CD4-positive, alpha-beta T cell (primary cell): ENCODE measurements at regions of chr1 and their contacts with region 1.

Region 1: DNA sequence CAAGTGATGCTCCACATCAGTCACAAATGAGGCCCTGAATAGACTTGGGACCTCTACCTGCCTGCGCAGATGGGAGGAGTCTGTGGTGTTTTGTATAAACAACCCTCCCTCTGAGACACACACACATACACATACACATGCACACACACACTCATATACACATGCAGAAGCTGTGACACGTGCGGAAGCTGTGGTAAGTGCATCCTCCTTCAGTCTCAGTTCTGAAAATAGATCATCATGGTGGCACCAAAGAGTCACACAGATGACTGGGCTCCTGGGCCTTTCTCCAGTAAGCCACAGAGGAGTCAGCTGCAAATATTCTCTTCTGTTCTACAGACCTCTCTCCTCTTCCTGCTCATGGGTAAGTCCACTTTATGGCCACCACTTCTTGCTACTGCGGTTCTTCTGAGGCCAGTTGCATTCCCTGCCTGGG is at the start of gene LY9:
- DNase-seq: peak; percentile 64 to 97 (median 72)
- ATAC-seq: peak; percentile 88
- H3K4me3 ChIP-seq: peak within 1 kb of the TSS; percentile 74
- H3K4me3 Mint-ChIP-seq: peak within 1 kb of the TSS; percentile 97
- H3K27ac ChIP-seq: peak within 1 kb of the TSS; percentile 73 to 88
- H3K27ac Mint-ChIP-seq: peak within 1 kb of the TSS; percentile 92
- H3K4me1 ChIP-seq: peaks cover 37% of the 10 kb centered on the region
- H3K4me1 Mint-ChIP-seq: peaks cover 62% of the 10 kb centered on the region
- H3K27me3 ChIP-seq: no peaks in the 10 kb centered on the region
- H3K27me3 Mint-ChIP-seq: no peaks in the 10 kb centered on the region
- CTCF ChIP-seq: no peak
- total RNA-seq, gene LY9: 124 TPM

Region 2: DNA sequence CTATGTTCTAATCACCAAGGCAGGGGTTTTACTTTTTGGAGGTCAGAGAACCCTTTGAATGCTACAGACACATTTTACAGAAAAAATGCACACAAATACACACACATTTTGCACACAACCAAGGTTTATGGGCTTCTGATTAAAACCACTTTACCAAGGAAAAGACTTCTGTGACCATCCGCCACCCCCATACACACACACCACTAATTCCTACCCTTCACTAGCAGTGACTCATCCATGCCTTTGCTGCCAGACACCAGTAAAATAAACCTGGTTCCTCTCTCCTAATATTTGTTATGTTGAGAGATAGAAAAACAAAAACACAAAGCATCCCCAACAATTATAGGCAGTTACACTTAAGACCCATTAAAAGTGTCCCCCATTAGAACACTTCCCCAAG is 777.1 kb before region 1 on chr1:
- CTCF ChIA-PET with region 1: no interaction called
- POLR2A ChIA-PET with region 1: no interaction called
- intact Hi-C with region 1: no loop called
- DNase-seq: no peak
- ATAC-seq: no peak
- H3K4me3 ChIP-seq: no peak overlapping the region
- H3K4me3 Mint-ChIP-seq: no peak overlapping the region
- H3K27ac ChIP-seq: no peak overlapping the region
- H3K27ac Mint-ChIP-seq: no peak overlapping the region
- H3K4me1 ChIP-seq: no peaks in the 10 kb centered on the region
- H3K4me1 Mint-ChIP-seq: no peaks in the 10 kb centered on the region
- H3K27me3 ChIP-seq: peaks cover 0 to 3% of the 10 kb centered on the region in 2 experiments
- H3K27me3 Mint-ChIP-seq: peaks cover 6% of the 10 kb centered on the region
- CTCF ChIP-seq: no peak

Region 3: DNA sequence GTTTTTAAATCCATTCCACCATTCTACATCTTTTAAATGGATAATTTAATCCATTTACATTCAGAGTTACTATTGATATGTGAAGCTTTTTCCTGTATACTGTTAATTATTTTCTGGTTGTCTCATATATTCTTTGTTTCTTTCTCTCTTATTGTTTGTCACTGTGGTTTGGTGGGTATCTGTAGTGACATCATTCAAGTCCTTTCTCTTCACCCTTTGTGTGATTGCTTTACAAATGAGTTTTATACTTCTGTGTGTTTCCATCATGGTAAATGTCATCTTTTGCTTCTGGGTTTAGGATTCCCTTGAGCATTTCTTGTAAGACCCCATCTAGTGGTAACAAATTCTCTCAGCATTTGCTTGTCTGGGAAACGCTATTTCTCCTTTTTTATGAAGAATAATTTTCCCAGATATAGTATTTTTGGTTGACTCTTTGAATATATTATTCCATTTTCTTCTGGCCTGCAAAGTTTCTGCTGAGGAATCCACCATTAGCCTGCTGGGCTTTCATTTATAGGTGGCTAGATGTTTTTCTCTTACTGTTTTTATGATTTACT is 10.2 kb after region 1 on chr1:
- CTCF ChIA-PET with region 1: interaction called, 6 read pairs
- POLR2A ChIA-PET with region 1: interaction called, 22 read pairs
- intact Hi-C with region 1: no loop called
- DNase-seq: no peak
- ATAC-seq: peak; percentile 66
- H3K4me3 ChIP-seq: no peak overlapping the region
- H3K4me3 Mint-ChIP-seq: peak overlapping the region; percentile 5
- H3K27ac ChIP-seq: no peak overlapping the region
- H3K27ac Mint-ChIP-seq: peak overlapping the region; percentile 40
- H3K4me1 ChIP-seq: peaks cover 44% of the 10 kb centered on the region
- H3K4me1 Mint-ChIP-seq: peaks cover 88% of the 10 kb centered on the region
- H3K27me3 ChIP-seq: no peaks in the 10 kb centered on the region
- H3K27me3 Mint-ChIP-seq: no peaks in the 10 kb centered on the region
- CTCF ChIP-seq: no peak

Region 4: GRCh38 chr1:160813215-160813614 is 17.2 kb after region 1 on chr1:
- CTCF ChIA-PET with region 1: no interaction called
- POLR2A ChIA-PET with region 1: interaction called, 22 read pairs
- intact Hi-C with region 1: loop called in 1 of 2 experiments (anchors 2 kb)
- DNase-seq: peak in 3 of 14 experiments; percentile 26 to 50 (median 38)
- ATAC-seq: peak; percentile 65
- H3K4me3 ChIP-seq: no peak overlapping the region
- H3K4me3 Mint-ChIP-seq: no peak overlapping the region
- H3K27ac ChIP-seq: no peak overlapping the region
- H3K27ac Mint-ChIP-seq: peak overlapping the region; percentile 71
- H3K4me1 ChIP-seq: peaks cover 20% of the 10 kb centered on the region
- H3K4me1 Mint-ChIP-seq: peaks cover 52% of the 10 kb centered on the region
- H3K27me3 ChIP-seq: no peaks in the 10 kb centered on the region
- H3K27me3 Mint-ChIP-seq: no peaks in the 10 kb centered on the region
- CTCF ChIP-seq: no peak

Region 5: GRCh38 chr1:160821628-160822027 is 25.7 kb after region 1 on chr1:
- CTCF ChIA-PET with region 1: interaction called, 3 read pairs
- POLR2A ChIA-PET with region 1: interaction called, 14 read pairs
- intact Hi-C with region 1: no loop called
- DNase-seq: no peak
- ATAC-seq: no peak
- H3K4me3 ChIP-seq: no peak overlapping the region
- H3K4me3 Mint-ChIP-seq: no peak overlapping the region
- H3K27ac ChIP-seq: no peak overlapping the region
- H3K27ac Mint-ChIP-seq: peak overlapping the region; percentile 74
- H3K4me1 ChIP-seq: peaks cover 3% of the 10 kb centered on the region
- H3K4me1 Mint-ChIP-seq: peaks cover 6% of the 10 kb centered on the region
- H3K27me3 ChIP-seq: no peaks in the 10 kb centered on the region
- H3K27me3 Mint-ChIP-seq: no peaks in the 10 kb centered on the region
- CTCF ChIP-seq: no peak

Region 6: GRCh38 chr1:160830321-160831153 is 34.6 kb after region 1 on chr1:
- CTCF ChIA-PET with region 1: interaction called, 4 read pairs
- POLR2A ChIA-PET with region 1: interaction called, 50 read pairs
- intact Hi-C with region 1: loop called (anchors 2 to 5 kb)
- DNase-seq: peak; percentile 67 to 89 (median 76)
- ATAC-seq: peak; percentile 84
- H3K4me3 ChIP-seq: no peak overlapping the region
- H3K4me3 Mint-ChIP-seq: no peak overlapping the region
- H3K27ac ChIP-seq: no peak overlapping the region
- H3K27ac Mint-ChIP-seq: peak overlapping the region; percentile 81
- H3K4me1 ChIP-seq: peaks cover 17% of the 10 kb centered on the region
- H3K4me1 Mint-ChIP-seq: peaks cover 35% of the 10 kb centered on the region
- H3K27me3 ChIP-seq: no peaks in the 10 kb centered on the region
- H3K27me3 Mint-ChIP-seq: no peaks in the 10 kb centered on the region
- CTCF ChIP-seq: peak; percentile 87

Region 7: GRCh38 chr1:160846281-160846680 is 50.3 kb after region 1 on chr1:
- CTCF ChIA-PET with region 1: no interaction called
- POLR2A ChIA-PET with region 1: no interaction called
- intact Hi-C with region 1: no loop called
- DNase-seq: no peak
- ATAC-seq: no peak
- H3K4me3 ChIP-seq: no peak overlapping the region
- H3K4me3 Mint-ChIP-seq: no peak overlapping the region
- H3K27ac ChIP-seq: no peak overlapping the region
- H3K27ac Mint-ChIP-seq: no peak overlapping the region
- H3K4me1 ChIP-seq: peaks cover 4% of the 10 kb centered on the region
- H3K4me1 Mint-ChIP-seq: peaks cover 7% of the 10 kb centered on the region
- H3K27me3 ChIP-seq: no peaks in the 10 kb centered on the region
- H3K27me3 Mint-ChIP-seq: no peaks in the 10 kb centered on the region
- CTCF ChIP-seq: no peak